Gastrocnemius medialis (tissue), 4 donors: ENCODE measurements at regions of chr10 and their contacts with region 1.

Region 1: DNA sequence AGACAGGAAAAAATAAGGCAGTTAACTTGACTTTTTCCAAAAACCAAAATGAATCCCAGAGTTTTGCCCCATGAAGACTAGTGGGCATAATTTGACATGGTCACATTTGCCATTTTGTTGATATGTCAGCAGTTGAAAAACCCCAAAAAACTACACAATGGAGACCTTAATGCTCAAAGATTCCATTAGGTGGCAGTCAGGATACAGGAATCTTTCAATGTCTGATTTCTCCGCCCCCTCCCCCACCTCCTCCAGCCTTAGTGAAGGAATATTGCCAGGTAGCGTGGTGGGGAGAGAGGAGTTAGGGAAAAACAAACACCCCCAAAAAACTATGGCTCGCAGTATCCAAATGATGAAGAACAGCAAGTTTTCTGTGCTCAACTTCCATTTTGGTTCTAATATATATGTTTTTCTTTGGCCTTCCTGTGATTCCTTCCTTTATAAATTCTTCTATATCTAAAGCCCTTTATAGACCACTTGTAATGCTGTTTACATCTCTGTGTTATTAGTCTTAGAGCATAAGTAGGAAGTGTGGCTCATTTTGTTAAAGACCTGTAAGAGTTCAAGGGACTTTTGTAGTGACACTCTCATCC is 6.7 kb upstream of the SMNDC1 start:
- DNase-seq: no peak
- ATAC-seq: peak in 1 of 2 donors; percentile 60
- H3K4me3 ChIP-seq: no peak overlapping the region
- H3K27ac ChIP-seq: no peak overlapping the region
- H3K4me1 ChIP-seq: no peaks in the 10 kb centered on the region
- H3K27me3 ChIP-seq: no peaks in the 10 kb centered on the region
- CTCF ChIP-seq: peak; percentile 32 to 67 (median 56)
- POLR2A ChIP-seq: no peak

Region 2: GRCh38 chr10:110547139-110547761 is 235.8 kb after region 1 on chr10:
- in situ Hi-C with region 1: loop called (anchors 5 to 10 kb)
- intact Hi-C with region 1: loop called (anchors 2 kb)
- DNase-seq: no peak
- ATAC-seq: peak; percentile 52 to 70
- H3K4me3 ChIP-seq: no peak overlapping the region
- H3K27ac ChIP-seq: no peak overlapping the region
- H3K4me1 ChIP-seq: no peaks in the 10 kb centered on the region
- H3K27me3 ChIP-seq: peaks cover 0 to 6% (median 0%) of the 10 kb centered on the region in 3 donors
- CTCF ChIP-seq: peak; percentile 57 to 81 (median 72)
- POLR2A ChIP-seq: no peak

Region 3: GRCh38 chr10:110556969-110557601 is 245.6 kb after region 1 on chr10:
- in situ Hi-C with region 1: loop called in 2 of 4 experiments (anchors 5 to 10 kb)
- intact Hi-C with region 1: no loop called
- DNase-seq: no peak
- ATAC-seq: no peak
- H3K4me3 ChIP-seq: no peak overlapping the region
- H3K27ac ChIP-seq: no peak overlapping the region
- H3K4me1 ChIP-seq: no peaks in the 10 kb centered on the region
- H3K27me3 ChIP-seq: peaks cover 0 to 5% (median 4%) of the 10 kb centered on the region in 3 donors
- CTCF ChIP-seq: peak in 3 of 5 experiments; percentile 21 to 63 (median 50)
- POLR2A ChIP-seq: no peak